Calu3 (cell line): ENCODE measurements at regions of chr1 and their contacts with region 1.

Region 1: DNA sequence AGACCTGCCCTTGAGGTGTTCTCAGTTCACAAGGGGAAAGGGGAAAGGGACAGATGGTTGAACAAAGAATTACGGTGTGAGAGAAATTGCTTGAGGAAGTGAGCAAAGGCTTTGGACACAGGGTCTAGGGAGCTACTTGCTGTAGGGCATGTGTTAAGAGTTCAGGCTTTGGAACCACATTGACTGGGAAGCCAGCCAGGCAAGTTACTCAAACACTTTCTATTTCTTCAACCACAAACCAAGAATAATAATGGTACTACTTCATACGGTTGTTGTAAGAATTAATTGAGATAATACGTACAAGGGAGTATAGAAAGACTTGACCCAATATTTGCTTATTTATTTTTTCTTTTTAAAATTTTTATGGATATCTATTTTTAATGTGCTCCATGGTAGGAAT is 26.6 kb downstream of the AK4 start:
- DNase-seq: peak; percentile 70
- H3K4me3 Mint-ChIP-seq: peak overlapping the region; percentile 54
- H3K27ac Mint-ChIP-seq: peak overlapping the region; percentile 88
- H3K4me1 Mint-ChIP-seq: peaks cover 81% of the 10 kb centered on the region
- H3K27me3 Mint-ChIP-seq: no peaks in the 10 kb centered on the region
- CTCF ChIP-seq: no peak

Region 2: GRCh38 chr1:65108025-65108642 is 66.5 kb before region 1 on chr1:
- CTCF ChIA-PET with region 1: interaction called, 8 read pairs
- intact Hi-C with region 1: loop called (anchors 2 kb)
- DNase-seq: peak; percentile 61
- H3K4me3 Mint-ChIP-seq: peak overlapping the region; percentile 33
- H3K27ac Mint-ChIP-seq: peak overlapping the region; percentile 28
- H3K4me1 Mint-ChIP-seq: peaks cover 37% of the 10 kb centered on the region
- H3K27me3 Mint-ChIP-seq: no peaks in the 10 kb centered on the region
- CTCF ChIP-seq: no peak

Region 3: DNA sequence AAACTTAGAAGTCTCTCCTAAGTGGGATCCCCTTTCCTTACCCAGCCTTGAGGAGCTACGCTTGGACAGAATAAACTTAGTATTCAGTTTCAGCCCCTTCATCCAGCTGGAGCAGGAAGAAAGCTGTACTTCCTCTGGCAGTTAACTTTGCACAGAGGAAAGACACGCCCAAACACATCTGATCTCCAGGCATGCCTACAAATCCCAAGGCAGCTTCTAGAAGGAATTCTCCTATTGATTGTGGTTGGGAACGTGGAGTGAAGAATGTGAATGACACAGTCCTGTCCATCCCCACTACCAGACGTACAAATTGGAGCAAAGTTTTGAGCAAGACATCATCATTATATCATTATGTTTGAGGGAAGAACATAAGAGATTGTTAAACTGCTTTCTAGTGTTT is 33.2 kb before region 1 on chr1:
- CTCF ChIA-PET with region 1: interaction called, 5 read pairs
- intact Hi-C with region 1: loop called (anchors 5 kb)
- DNase-seq: peak; percentile 28
- H3K4me3 Mint-ChIP-seq: no peak overlapping the region
- H3K27ac Mint-ChIP-seq: no peak overlapping the region
- H3K4me1 Mint-ChIP-seq: peaks cover 43% of the 10 kb centered on the region
- H3K27me3 Mint-ChIP-seq: no peaks in the 10 kb centered on the region
- CTCF ChIP-seq: no peak